ENCODE measurements at regions of chr15 and their contacts with region 1.

Region 1: DNA sequence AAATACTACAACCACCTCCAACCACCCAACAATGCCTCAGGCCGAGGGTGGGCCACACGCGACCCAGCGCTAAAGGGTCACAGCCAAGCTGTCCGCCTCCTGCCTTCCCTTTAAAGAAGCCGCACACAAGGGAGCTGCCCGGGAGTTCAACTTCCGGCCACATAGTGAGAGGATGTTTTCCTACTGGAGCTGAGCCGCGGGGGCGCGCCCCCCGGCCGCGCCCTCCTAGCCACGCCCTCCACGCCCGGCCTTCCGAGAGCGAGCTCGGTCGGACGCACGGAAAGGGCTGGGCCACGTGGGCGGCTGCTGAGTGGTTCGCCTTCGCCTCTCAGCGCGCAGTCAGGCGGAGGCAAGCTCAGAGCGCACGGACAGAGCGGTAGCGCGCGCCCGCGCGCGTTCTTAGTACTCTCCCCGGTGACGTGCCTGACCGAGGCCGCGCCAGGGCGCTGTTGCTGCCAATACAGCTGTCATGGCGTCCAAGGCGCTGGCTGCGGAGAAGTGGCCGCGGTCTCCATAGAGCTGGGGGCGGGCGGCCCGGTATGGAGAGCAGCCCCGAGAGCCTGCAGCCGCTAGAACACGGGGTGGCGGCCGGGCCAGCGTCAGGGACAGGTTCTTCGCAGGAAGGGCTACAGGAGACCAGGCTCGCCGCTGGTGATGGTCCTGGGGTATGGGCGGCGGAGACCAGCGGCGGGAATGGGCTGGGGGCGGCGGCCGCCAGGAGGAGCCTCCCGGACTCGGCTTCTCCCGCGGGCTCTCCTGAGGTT is at the start of gene MINDY2:
- DNase-seq: peak; percentile 99
- H3K4me3 ChIP-seq: peak within 1 kb of the TSS; percentile 90 to 98 (median 96)
- H3K27ac ChIP-seq: peak within 1 kb of the TSS; percentile 99
- H3K4me1 ChIP-seq: peaks cover 26 to 55% (median 50%) of the 10 kb centered on the region in 4 donors
- H3K27me3 ChIP-seq: no peaks in the 10 kb centered on the region
- CTCF ChIP-seq: peak in 2 of 3 experiments; percentile 10 to 15
- EP300 ChIP-seq: no peak
- POLR2A ChIP-seq: peak; percentile 35
- total RNA-seq, gene MINDY2: 26.6 to 38.2 (median 29.2) TPM

Region 2: DNA sequence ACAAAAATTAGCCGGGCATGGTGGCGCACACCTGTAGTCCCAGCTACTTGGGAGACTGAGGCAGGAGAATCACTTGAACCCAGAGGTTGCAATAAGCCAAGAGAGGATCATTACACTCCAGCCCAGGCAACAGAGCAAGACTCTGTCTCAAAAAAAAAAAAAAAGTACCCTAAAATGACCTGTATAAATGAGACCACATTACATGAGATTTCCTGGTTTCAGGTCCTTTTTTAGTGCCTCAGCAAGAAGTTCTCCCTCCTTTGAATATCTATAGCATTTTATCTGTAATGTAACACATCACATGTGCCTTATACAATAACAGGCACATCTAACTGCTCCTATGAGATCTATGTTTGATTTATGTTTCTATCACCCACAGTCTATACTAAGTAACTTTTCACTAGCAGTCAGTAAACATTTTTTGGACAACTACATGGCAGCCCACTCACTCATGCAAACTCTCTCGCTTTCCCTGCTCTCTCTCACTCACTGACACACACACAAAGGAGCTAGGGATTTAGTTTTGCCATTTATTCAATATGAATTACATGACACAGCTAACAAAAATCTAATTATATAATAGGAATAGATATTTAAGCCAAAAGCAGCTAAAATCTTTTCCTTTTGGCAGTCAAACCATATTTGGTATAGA is 55.6 kb before region 1 on chr15:
- intact Hi-C with region 1: no loop called
- DNase-seq: no peak
- H3K4me3 ChIP-seq: no peak overlapping the region
- H3K27ac ChIP-seq: no peak overlapping the region
- H3K4me1 ChIP-seq: peaks cover 0 to 4% (median 2%) of the 10 kb centered on the region in 4 donors
- H3K27me3 ChIP-seq: no peaks in the 10 kb centered on the region
- CTCF ChIP-seq: no peak
- EP300 ChIP-seq: no peak
- POLR2A ChIP-seq: no peak

Region 3: DNA sequence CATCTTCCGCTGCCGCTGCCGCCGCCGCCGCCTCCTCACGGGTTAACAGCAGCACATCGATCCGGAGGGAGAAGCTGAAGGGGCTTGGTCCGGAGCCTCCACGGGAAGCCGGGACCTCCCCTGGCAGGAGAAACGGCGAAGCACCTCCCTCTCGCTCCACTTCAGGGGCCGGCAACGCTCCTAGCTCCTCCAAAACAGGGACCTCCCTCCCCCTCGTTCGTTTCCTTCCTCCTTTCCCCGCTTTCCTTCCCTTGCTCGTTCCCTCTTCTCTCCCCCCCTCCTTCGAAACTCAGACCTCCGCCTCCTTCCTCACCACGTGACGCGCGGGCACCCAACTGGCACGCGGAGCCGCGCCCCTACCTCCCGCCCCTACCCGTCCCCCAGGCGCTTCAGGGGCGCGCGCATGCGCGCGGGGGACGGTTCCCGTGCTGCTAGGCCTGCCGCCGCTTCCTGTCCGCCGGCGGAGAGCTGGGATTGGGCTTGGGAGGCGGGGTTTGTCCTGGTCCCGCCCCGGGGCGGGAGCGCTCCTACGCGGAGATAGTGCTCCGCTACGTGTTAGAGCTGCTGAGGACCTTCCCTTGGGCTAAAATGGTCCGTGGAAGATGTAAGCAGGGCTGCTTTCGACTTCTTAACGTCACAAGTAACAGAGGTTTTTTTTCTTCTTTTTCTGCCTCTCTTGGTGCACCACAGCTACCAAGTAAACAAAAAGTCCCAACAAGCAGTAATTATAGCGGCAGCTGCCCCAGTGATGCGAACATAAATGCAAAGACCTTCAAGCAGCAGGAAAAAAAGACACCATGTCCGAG is 21.3 kb before region 1 on chr15 and contains the start of gene ADAM10:
- intact Hi-C with region 1: loop called (anchors 1 kb)
- DNase-seq: peak; percentile 99
- H3K4me3 ChIP-seq: peak within 1 kb of the TSS; percentile 88 to 96 (median 92)
- H3K27ac ChIP-seq: peak within 1 kb of the TSS; percentile 98 to 99 (median 98)
- H3K4me1 ChIP-seq: peaks cover 25 to 39% (median 35%) of the 10 kb centered on the region in 4 donors
- H3K27me3 ChIP-seq: no peaks in the 10 kb centered on the region
- CTCF ChIP-seq: no peak
- EP300 ChIP-seq: no peak
- POLR2A ChIP-seq: peak; percentile 75
- total RNA-seq, gene ADAM10: 43.8 to 58.8 (median 48.5) TPM

Region 4: GRCh38 chr15:58830556-58830955 is 59.5 kb after region 1 on chr15:
- intact Hi-C with region 1: no loop called
- DNase-seq: no peak
- H3K4me3 ChIP-seq: no peak overlapping the region
- H3K27ac ChIP-seq: no peak overlapping the region
- H3K4me1 ChIP-seq: peaks cover 0 to 3% (median 0%) of the 10 kb centered on the region in 4 donors
- H3K27me3 ChIP-seq: no peaks in the 10 kb centered on the region
- CTCF ChIP-seq: no peak
- EP300 ChIP-seq: no peak
- POLR2A ChIP-seq: no peak

Region 5: GRCh38 chr15:58933281-58934113 is 162.5 kb after region 1 on chr15 and contains the start of gene SLTM:
- intact Hi-C with region 1: loop called (anchors 2 kb)
- DNase-seq: peak; percentile 98
- H3K4me3 ChIP-seq: peak within 1 kb of the TSS; percentile 79 to 95 (median 86)
- H3K27ac ChIP-seq: peak within 1 kb of the TSS; percentile 93 to 100 (median 98)
- H3K4me1 ChIP-seq: peaks cover 20 to 43% (median 33%) of the 10 kb centered on the region in 4 donors
- H3K27me3 ChIP-seq: no peaks in the 10 kb centered on the region
- CTCF ChIP-seq: peak; percentile 9 to 42 (median 23)
- EP300 ChIP-seq: no peak
- POLR2A ChIP-seq: peak; percentile 90
- total RNA-seq, gene SLTM: 69.1 to 88.5 (median 76.3) TPM

Measured in esophagus muscularis mucosa (tissue), 4 donors.